Activated B cell treated with CpG ODN at 0.5 μM for 24 hours (primary cell): ENCODE measurements at regions of chr7 and their contacts with region 1.

Region 1: DNA sequence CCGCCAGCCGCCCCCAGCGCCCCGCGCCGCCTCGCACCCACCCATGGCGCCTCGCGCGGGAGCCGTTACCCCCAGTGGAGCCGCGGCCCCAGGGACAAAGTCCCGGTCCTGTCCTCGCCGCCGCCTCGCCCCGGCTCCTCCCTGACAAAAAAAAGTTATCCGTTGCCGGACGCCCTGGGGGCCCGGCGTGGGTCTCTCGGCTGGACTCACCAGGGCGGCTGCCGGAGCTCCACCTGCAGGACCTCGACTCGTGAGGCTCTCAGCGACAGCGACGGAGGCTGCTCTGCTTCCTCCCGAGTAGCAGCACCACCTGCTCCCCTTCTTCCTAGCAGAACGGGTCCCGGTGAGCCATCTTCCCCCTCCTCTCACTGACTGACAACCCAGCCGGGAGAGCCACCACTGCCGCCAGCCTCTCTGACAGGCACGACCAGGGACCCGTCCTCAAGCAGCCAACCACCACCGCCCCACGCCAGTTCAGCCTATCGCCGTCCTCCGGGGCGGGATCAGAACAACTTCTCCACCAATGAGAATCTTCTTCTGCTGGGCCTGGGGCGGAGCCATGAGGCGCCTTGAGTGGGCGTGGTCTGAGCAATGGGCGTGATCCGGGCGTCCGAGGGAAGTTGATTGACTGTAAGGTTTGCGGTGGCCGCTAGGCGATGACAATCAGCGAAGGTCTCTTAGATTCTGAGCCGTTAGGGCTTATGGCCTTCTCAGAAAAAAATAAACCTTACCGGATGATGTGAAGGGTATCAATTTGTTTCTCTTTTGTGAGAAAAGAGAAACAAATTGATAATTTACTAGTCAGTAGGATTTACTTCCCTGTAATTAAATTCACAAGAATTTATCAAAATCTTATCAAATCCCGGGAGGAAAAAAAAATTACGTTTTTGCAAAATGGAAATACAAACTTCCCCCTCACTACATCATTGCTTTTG is at the start of gene HYCC1:
- DNase-seq: peak; percentile 95
- ATAC-seq: peak; percentile 96
- H3K4me3 Mint-ChIP-seq: peak within 1 kb of the TSS; percentile 99
- H3K27ac Mint-ChIP-seq: peak within 1 kb of the TSS; percentile 93
- H3K4me1 Mint-ChIP-seq: peaks cover 44% of the 10 kb centered on the region
- H3K27me3 Mint-ChIP-seq: no peaks in the 10 kb centered on the region
- CTCF ChIP-seq: no peak
- total RNA-seq, gene HYCC1: 39.9 and 41.9 TPM in 2 replicates

Region 2: DNA sequence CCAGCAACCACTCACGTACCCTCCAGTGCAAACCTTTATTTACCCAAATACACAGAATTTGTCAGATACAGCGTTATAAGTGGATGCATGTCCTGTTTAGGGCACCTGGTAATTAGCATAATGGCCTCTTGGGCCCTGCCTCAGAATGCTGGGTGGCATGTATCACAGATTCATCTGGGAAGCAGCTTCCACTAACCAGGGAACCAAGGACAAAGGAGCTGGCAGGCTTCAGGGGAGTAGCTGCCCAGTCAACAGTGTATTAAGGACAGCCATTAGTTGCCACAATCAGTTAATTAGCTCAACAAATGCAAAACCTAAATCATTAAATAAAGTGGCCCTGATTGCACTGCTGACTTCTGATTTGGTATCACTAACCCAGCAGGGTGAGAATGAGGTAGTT is 762.7 kb before region 1 on chr7:
- CTCF ChIA-PET with region 1: no interaction called
- POLR2A ChIA-PET with region 1: no interaction called
- intact Hi-C with region 1: no loop called
- DNase-seq: no peak
- ATAC-seq: no peak
- H3K4me3 Mint-ChIP-seq: no peak overlapping the region
- H3K27ac Mint-ChIP-seq: no peak overlapping the region
- H3K4me1 Mint-ChIP-seq: no peaks in the 10 kb centered on the region
- H3K27me3 Mint-ChIP-seq: no peaks in the 10 kb centered on the region
- CTCF ChIP-seq: no peak

Region 3: DNA sequence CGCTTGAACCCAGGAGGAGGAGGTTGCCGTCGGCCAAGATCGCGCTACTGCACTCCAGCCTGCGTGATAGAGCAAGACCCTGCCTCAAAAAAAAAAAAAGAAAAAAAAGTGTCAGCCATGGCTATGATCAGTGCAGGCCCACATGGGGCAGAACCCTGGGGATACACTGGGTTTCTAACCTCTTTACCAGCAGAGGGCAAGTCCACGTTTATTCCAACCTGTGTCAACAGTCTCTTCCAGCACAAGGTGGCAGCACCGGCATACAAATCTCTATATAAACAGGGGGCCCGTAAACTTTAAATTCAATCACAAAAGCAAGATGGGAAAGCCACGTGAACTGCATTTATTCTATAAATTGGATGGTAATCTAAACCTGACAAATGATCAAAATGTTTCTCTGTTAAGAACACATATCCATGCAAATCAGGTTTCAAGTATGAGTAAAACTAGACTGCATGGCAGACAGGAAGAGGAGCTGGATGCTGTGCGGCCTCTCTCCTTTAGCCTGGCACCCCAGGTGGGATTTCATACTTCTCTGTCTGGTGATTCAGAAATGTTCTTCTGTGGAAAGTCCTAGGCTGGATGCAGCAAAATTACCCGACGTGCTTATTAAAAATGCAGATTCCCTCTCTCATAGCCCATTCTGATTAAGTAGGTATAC is 454.0 kb before region 1 on chr7:
- CTCF ChIA-PET with region 1: no interaction called
- POLR2A ChIA-PET with region 1: interaction called, 6 read pairs
- intact Hi-C with region 1: loop called (anchors 5 kb)
- DNase-seq: peak; percentile 43
- ATAC-seq: peak; percentile 80
- H3K4me3 Mint-ChIP-seq: peak overlapping the region; percentile 36
- H3K27ac Mint-ChIP-seq: peak overlapping the region; percentile 70
- H3K4me1 Mint-ChIP-seq: peaks cover 50% of the 10 kb centered on the region
- H3K27me3 Mint-ChIP-seq: no peaks in the 10 kb centered on the region
- CTCF ChIP-seq: peak; percentile 24

Region 4: DNA sequence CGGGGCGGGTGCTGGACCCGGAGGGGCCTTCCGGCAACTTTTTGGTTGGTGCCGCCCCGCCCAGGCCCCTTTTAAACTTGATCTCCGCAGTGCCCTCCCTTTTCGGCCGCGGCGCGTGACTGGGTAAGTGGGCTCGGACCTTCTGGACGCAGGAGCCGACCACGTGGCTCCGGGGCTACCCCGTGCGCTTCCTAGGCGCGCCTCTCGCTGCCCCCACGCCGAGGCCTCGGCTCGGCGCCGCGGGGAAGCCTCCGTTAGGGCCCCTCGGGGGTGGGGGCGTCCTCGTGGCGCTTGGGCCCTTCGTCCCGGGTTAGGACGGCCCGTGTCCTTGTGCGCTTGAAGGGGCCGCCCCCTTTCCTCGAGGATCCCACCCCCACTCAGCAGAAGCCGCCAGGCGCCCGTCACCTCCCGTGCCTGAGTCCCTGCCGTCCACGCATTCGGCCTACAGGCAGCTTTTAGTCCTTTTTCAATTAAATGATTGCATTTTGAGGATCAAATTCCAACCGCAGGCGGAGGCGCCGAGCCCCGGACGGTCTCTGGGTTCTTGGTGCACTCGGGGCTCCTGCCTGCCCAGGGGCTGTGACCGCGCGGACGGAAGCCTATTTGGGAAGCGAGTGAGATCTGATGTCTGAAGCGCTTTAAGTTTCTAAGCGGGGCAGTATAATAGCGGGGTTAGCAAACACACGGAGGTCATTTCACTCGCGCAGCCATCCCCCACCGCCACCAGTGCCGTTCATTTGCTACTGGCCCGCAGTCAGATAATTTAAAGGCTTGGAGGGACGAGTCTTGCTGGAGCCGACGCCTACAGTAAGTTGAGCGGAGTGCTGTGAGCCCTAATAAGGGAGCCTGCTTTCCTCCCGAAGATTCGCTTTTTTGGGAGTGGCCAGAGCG is 159.6 kb before region 1 on chr7:
- CTCF ChIA-PET with region 1: no interaction called
- POLR2A ChIA-PET with region 1: interaction called, 5 read pairs
- intact Hi-C with region 1: loop called (anchors 1 kb)
- DNase-seq: peak; percentile 84
- ATAC-seq: peak; percentile 81
- H3K4me3 Mint-ChIP-seq: peak overlapping the region; percentile 96
- H3K27ac Mint-ChIP-seq: peak overlapping the region; percentile 91
- H3K4me1 Mint-ChIP-seq: peaks cover 54% of the 10 kb centered on the region
- H3K27me3 Mint-ChIP-seq: no peaks in the 10 kb centered on the region
- CTCF ChIP-seq: no peak

Region 5: GRCh38 chr7:22969010-22969431 is 45.0 kb before region 1 on chr7:
- CTCF ChIA-PET with region 1: no interaction called
- POLR2A ChIA-PET with region 1: no interaction called
- intact Hi-C with region 1: no loop called
- DNase-seq: no peak
- ATAC-seq: no peak
- H3K4me3 Mint-ChIP-seq: no peak overlapping the region
- H3K27ac Mint-ChIP-seq: no peak overlapping the region
- H3K4me1 Mint-ChIP-seq: no peaks in the 10 kb centered on the region
- H3K27me3 Mint-ChIP-seq: no peaks in the 10 kb centered on the region
- CTCF ChIP-seq: no peak

Region 6: GRCh38 chr7:22996470-22996869 is 17.5 kb before region 1 on chr7:
- CTCF ChIA-PET with region 1: no interaction called
- POLR2A ChIA-PET with region 1: no interaction called
- intact Hi-C with region 1: loop called (anchors 1 kb)
- DNase-seq: no peak
- ATAC-seq: no peak
- H3K4me3 Mint-ChIP-seq: no peak overlapping the region
- H3K27ac Mint-ChIP-seq: no peak overlapping the region
- H3K4me1 Mint-ChIP-seq: peaks cover 54% of the 10 kb centered on the region
- H3K27me3 Mint-ChIP-seq: no peaks in the 10 kb centered on the region
- CTCF ChIP-seq: no peak

Region 7: GRCh38 chr7:23026164-23026563 is 12.2 kb after region 1 on chr7:
- CTCF ChIA-PET with region 1: interaction called, 5 read pairs
- POLR2A ChIA-PET with region 1: interaction called, 3 read pairs
- intact Hi-C with region 1: loop called (anchors 1 kb)
- DNase-seq: no peak
- ATAC-seq: no peak
- H3K4me3 Mint-ChIP-seq: no peak overlapping the region
- H3K27ac Mint-ChIP-seq: peak overlapping the region; percentile 54
- H3K4me1 Mint-ChIP-seq: peaks cover 53% of the 10 kb centered on the region
- H3K27me3 Mint-ChIP-seq: no peaks in the 10 kb centered on the region
- CTCF ChIP-seq: no peak

Region 8: DNA sequence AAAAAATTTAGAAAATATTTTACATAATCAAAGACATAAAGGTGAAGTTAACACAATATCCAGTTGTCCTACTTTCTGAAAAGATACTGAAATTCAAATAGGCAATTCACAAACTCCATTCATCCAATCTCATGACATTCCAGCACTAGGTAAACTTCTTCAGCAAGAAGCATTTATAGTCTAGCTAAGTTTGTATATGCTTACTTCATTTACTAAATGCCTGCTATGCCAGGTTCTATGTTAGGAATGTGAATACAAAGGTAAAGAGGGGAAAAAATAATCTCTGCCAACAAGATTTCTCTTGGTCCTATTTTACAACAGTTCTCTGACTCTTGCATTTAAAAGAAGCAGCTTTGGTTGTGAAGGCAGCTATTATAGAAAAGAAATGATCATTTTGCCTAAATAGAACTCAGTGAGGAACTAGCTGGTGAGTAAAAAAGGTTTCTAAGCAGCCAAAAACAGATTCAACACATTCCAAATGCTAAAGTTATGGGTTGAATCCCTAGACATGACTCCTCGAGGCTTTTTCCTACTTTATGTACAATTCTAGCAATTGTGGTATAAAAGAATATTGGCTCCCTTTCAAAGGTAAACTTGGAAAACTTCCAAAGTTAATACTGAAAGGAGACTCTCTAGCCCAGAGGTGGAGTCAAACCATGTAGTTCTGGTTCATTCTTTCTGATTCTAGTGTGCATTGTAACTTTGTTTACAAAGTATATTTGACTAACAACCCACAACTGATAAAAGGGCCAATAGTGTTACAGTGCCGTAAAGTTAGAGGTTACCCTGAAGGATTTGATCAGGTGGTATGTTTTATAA is 60.7 kb after region 1 on chr7:
- CTCF ChIA-PET with region 1: no interaction called
- POLR2A ChIA-PET with region 1: no interaction called
- intact Hi-C with region 1: no loop called
- DNase-seq: no peak
- ATAC-seq: no peak
- H3K4me3 Mint-ChIP-seq: no peak overlapping the region
- H3K27ac Mint-ChIP-seq: no peak overlapping the region
- H3K4me1 Mint-ChIP-seq: no peaks in the 10 kb centered on the region
- H3K27me3 Mint-ChIP-seq: peaks cover 2% of the 10 kb centered on the region
- CTCF ChIP-seq: no peak

Region 9: GRCh38 chr7:23105644-23106056 is 91.7 kb after region 1 on chr7 and contains the start of gene KLHL7:
- CTCF ChIA-PET with region 1: no interaction called
- POLR2A ChIA-PET with region 1: no interaction called
- intact Hi-C with region 1: loop called (anchors 1 kb)
- DNase-seq: peak; percentile 98
- ATAC-seq: peak; percentile 95
- H3K4me3 Mint-ChIP-seq: peak within 1 kb of the TSS; percentile 94
- H3K27ac Mint-ChIP-seq: peak within 1 kb of the TSS; percentile 97
- H3K4me1 Mint-ChIP-seq: peaks cover 32% of the 10 kb centered on the region
- H3K27me3 Mint-ChIP-seq: no peaks in the 10 kb centered on the region
- CTCF ChIP-seq: no peak
- total RNA-seq, gene KLHL7: 12.2 and 13.4 TPM in 2 replicates

Region 10: GRCh38 chr7:23373151-23374004 is 359.4 kb after region 1 on chr7:
- CTCF ChIA-PET with region 1: no interaction called
- POLR2A ChIA-PET with region 1: no interaction called
- intact Hi-C with region 1: loop called (anchors 10 kb)
- DNase-seq: peak; percentile 28
- ATAC-seq: peak; percentile 69
- H3K4me3 Mint-ChIP-seq: peak overlapping the region; percentile 68
- H3K27ac Mint-ChIP-seq: peak overlapping the region; percentile 94
- H3K4me1 Mint-ChIP-seq: peaks cover 70% of the 10 kb centered on the region
- H3K27me3 Mint-ChIP-seq: no peaks in the 10 kb centered on the region
- CTCF ChIP-seq: no peak